Activated CD8-positive, alpha-beta memory T cell treated with anti-CD3 and anti-CD28 coated beads, Interleukin-2, amount 10 ng/mL, durations not matched to agents 7 days and 5 days (primary cell): ENCODE measurements at regions of chr21 and their contacts with region 1.

Region 1: GRCh38 chr21:34986561-34987500 is 62.3 kb downstream of the RUNX1 start:
- DNase-seq: peak; percentile 94
- ATAC-seq: peak; percentile 41
- H3K4me3 Mint-ChIP-seq: peak overlapping the region; percentile 62
- H3K27ac Mint-ChIP-seq: peak overlapping the region; percentile 87
- H3K4me1 Mint-ChIP-seq: peaks cover 89% of the 10 kb centered on the region
- H3K27me3 Mint-ChIP-seq: no peaks in the 10 kb centered on the region

Region 2: DNA sequence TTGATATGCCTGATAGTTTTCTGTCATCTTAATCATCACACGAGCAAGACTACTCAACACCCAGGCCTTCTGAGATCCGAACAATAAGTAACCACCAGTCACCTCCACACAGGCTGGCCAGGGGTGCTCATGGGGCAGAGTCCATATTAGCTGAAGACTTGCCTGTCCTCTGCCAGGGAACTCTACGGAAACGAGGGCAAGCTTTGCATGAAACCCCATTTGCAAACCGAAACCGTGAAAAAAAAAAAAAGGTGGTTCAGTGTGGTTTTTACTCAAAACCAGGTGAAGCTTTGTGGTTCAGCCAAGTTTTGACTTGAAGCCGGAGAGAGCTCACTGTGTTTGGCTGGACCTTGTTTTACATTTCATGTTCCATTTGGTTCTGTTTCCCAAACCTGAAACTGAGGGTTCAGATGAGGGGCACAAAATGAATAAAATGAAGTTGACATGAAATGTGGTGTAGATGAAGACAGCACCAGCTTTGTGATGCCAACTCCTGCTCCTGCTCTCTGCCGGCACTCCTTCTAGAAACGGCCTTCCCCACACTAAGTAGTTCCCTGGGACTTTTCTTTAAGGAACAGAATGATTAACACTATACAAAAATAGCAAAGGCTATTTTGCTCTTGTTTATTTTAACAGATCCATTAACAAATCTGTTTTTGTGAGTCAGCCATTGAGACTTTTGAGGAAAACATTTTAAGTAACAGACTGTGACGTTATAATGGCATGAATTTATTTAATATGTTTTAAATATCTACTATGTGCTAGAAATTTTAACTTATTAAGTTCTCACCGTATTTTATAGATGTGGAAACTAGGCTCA is 12.5 kb before region 1 on chr21:
- CTCF ChIA-PET with region 1: interaction called, 30 read pairs
- DNase-seq: peak; percentile 74
- ATAC-seq: peak; percentile 91
- H3K4me3 Mint-ChIP-seq: peak overlapping the region; percentile 57
- H3K27ac Mint-ChIP-seq: peak overlapping the region; percentile 82
- H3K4me1 Mint-ChIP-seq: peaks cover 71% of the 10 kb centered on the region
- H3K27me3 Mint-ChIP-seq: peaks cover 20% of the 10 kb centered on the region

Region 3: GRCh38 chr21:35014302-35015041 is 27.6 kb after region 1 on chr21:
- CTCF ChIA-PET with region 1: interaction called, 10 read pairs
- DNase-seq: no peak
- ATAC-seq: no peak
- H3K4me3 Mint-ChIP-seq: no peak overlapping the region
- H3K27ac Mint-ChIP-seq: no peak overlapping the region
- H3K4me1 Mint-ChIP-seq: peaks cover 37% of the 10 kb centered on the region
- H3K27me3 Mint-ChIP-seq: no peaks in the 10 kb centered on the region

Region 4: DNA sequence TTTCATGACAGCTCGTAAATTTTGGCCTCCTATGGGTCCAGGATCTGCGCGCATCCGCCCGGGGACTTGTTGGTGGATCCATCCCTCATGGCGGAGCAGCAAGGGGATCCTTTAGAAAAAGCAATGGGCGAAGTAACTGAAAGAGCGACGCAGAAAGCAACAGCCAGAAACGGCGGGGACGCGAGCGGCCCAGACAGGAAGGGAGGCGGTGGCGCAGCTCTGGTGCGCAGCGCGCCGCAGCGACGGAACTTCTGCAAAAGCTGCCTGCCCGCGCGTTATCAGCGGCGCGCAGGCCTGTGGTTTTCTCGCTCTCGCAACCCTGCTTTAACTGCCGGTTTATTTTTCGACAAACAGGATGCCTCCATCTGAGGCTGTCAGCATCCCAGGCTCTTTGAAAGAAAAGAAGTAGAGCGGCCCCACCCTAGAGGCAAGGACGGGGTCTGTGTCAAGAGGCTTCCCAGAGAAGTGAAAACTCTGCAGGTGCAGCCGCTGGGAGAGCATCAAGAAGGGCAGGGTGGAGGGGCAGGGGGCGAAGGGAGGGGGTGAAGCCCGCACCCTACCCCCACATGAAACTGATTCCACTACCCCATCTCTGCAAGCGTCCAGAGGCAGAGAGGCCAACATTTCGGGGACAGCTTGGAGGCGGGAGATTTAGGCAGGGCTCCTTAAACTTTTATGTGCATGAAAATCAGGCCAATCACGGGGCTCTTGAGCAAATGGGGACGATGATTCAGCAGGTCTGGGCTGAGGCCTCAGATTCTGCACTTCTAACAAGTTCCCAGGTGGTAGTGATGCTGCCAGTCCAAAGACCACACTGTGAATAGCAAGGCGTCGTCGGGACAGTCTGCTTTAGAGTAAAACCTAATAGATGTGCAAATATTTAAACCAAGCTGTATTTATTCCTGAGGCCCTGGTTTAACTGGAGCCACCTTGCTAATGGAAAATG is 40.1 kb after region 1 on chr21:
- CTCF ChIA-PET with region 1: interaction called, 21 read pairs
- DNase-seq: peak; percentile 94
- ATAC-seq: peak; percentile 85
- H3K4me3 Mint-ChIP-seq: peak overlapping the region; percentile 77
- H3K27ac Mint-ChIP-seq: peak overlapping the region; percentile 100
- H3K4me1 Mint-ChIP-seq: peaks cover 80% of the 10 kb centered on the region
- H3K27me3 Mint-ChIP-seq: no peaks in the 10 kb centered on the region